Mucosa of descending colon (tissue), 3 donors: ENCODE measurements at regions of chr3 and their contacts with region 1.

Region 1: DNA sequence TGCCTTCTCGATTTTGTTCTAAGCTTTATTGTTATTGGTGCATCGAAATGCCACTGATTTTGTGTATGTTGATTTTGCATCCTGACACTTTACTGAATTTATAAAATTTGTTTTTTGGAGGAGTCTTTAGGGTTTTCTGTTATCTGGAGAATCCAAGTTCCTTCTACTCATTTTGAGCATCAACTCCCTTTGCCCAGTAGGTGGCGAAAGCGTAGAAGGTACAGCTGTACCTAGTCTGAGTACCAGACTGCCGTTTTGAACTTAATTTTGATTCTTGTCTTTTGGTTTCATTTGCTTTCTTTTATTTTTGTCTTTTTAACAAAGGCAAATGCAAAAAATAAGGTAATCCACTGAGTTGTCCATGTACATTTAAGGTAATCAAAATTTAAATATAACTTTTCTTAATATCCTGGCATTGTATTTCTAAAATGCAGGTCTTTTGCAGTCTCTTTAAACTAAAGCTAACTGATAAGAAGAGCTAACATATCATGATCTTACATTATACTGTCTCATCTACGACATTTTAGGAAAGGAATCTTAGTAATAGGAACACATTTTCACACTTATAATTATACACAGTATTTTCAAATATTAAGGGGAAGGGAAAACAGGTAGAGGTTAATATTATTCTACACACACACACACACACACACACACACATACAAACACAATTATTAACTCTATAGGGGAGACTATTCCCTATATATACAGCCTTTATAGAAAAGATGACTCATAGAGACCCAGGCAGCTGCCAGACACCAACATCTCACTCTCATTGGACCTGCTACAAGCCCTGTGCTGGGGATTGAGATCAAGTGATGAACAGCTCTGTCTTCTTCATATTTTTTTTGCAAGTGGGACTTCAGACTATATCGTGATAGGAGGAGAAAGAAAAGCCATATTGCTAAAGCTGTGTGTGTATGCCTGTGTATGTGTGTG is 71.7 kb downstream of the SYNPR start:
- DNase-seq: peak in 1 of 3 donors; percentile 68
- ATAC-seq: peak; percentile 51
- H3K4me3 ChIP-seq: no peak overlapping the region
- H3K4me1 ChIP-seq: peaks cover 14% of the 10 kb centered on the region
- CTCF ChIP-seq: peak; percentile 39

Region 2: DNA sequence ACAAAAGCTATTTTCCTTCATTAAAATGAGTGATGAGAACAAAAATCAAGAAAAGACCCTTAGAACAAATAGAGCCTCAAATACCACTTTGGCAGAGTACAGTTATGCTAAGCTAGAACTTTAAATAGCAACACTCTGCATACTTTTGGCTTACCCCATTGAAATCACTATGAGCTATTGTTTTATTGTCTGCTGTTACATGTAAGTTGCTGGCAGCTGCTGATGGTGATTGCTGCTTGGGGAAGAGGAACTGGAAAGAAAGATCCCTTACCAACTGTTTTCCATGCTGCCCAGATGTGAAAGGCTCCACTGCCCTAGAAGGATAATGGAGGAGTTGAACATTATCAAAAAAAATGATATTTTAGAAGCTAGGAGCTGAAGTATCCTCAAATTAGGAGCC is 63.7 kb after region 1 on chr3:
- intact Hi-C with region 1: no loop called
- DNase-seq: no peak
- ATAC-seq: no peak
- H3K4me3 ChIP-seq: no peak overlapping the region
- H3K4me1 ChIP-seq: no peaks in the 10 kb centered on the region
- CTCF ChIP-seq: no peak

Region 3: DNA sequence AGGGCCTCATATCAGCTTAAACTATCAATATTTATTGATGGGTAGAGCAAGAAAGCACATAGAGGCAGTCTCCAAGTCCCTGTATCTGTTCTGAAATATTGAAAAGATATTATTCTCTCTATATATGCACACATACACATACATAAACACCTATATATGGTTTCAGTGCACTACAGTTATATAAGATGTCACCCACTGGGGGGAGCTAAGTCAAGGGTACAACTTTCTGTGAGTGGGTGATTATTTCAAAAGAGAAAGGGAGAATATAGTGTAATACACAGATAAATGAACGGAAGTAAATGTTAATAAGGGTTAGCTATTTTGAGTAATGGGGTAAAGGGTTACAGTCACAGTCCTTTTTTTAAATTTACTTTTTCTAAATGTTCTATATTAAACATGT is 311.4 kb after region 1 on chr3:
- intact Hi-C with region 1: loop called in 1 of 2 experiments (anchors 5 kb)
- DNase-seq: no peak
- ATAC-seq: no peak
- H3K4me3 ChIP-seq: no peak overlapping the region
- H3K4me1 ChIP-seq: no peaks in the 10 kb centered on the region
- CTCF ChIP-seq: no peak

Region 4: DNA sequence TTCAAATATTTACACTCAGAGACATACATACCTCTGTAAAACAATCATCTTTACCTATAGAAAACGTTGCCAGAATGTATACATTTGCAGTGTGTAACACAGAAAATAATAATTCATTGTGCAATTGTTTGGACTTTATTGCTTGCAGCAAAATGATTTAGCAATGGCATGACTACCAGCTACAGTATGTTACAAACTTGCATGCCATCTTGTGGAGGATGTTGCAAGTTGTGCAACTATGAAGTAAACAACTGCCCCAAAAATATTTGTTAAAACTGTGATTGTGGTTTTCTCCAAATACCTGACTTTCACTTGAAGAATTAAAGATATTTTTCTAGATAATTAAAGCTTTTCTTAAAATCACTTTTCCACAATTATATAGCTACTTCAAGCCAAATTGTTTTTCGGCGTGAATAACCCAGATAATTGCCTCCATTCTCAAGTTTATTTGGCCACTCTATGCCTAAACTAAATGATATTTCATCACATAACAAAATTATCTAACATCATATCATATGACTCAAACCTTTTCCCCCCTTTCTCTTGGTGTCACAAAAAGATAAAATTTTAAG is 442.2 kb after region 1 on chr3:
- intact Hi-C with region 1: loop called in 1 of 2 experiments (anchors 10 kb)
- DNase-seq: peak in 1 of 3 donors; percentile 16
- ATAC-seq: no peak
- H3K4me3 ChIP-seq: no peak overlapping the region
- H3K4me1 ChIP-seq: no peaks in the 10 kb centered on the region
- CTCF ChIP-seq: no peak

Region 5: DNA sequence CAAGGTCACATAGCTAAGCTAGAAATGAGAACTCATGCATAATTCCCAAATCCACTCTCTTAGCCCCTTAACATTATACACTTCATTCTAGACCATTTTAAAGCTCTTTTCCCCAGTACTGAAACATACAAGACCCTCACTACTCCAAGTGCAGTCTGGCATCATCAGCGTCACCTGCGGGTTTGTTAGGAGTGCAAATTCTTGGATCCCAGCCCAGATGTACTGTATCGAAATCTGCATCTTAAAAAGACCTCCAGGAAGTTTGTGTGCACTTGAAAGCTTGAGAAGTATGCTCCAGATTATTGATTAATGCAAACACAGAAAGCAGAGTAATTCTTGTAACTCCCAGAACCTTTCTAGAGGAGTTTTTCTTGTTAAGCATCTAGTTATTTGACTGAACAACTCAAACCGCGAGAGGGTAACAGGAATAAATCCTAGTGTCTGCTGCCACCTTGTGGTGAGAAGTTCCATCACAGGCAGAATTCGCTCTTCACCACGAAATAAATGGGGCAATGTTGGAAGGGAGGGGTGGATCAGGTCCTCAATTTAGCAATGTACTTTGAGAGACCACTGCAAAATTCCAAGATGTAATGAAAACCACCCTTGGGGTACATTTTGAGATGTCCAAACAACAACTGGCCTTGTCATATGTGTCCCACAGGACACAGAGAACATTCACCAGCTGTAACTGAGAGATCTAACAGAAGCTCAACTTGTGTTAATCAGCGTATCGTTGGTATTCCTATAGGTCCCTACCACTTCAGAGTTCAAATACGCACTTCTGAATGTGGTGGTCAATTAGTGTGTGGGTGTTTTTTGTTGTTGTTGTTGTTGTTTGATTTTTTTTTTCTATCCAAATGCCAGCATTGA is 468.7 kb after region 1 on chr3:
- intact Hi-C with region 1: loop called in 1 of 2 experiments (anchors 5 kb)
- DNase-seq: peak in 2 of 3 donors; percentile 38 to 86
- ATAC-seq: peak; percentile 81
- H3K4me3 ChIP-seq: no peak overlapping the region
- H3K4me1 ChIP-seq: peaks cover 6% of the 10 kb centered on the region
- CTCF ChIP-seq: peak; percentile 47